Endothelial cell of umbilical vein (primary cell): ENCODE measurements at regions of chr19 and their contacts with region 1.

Region 1: GRCh38 chr19:48391107-48391986 is at the start of gene KDELR1:
- DNase-seq: peak; percentile 75
- H3K4me3 ChIP-seq: peak within 1 kb of the TSS; percentile 76 to 99 (median 83)
- H3K27ac ChIP-seq: peak within 1 kb of the TSS; percentile 65
- H3K4me1 ChIP-seq: peaks cover 3% of the 10 kb centered on the region
- H3K27me3 ChIP-seq: peaks cover 16 to 33% of the 10 kb centered on the region in 2 experiments
- CTCF ChIP-seq: peak; percentile 94 to 99
- POLR2A ChIP-seq: peak; percentile 77
- total RNA-seq, gene KDELR1: 199 and 200 TPM in 2 replicates

Region 2: GRCh38 chr19:48218997-48219396 is 172.3 kb before region 1 on chr19:
- CTCF ChIA-PET with region 1: no interaction called
- POLR2A ChIA-PET with region 1: no interaction called
- dilution Hi-C with region 1: no loop called
- intact Hi-C with region 1: no loop called
- DNase-seq: peak; percentile 65
- H3K4me3 ChIP-seq: no peak overlapping the region
- H3K27ac ChIP-seq: peak overlapping the region; percentile 63
- H3K4me1 ChIP-seq: peaks cover 19% of the 10 kb centered on the region
- H3K27me3 ChIP-seq: no peaks in the 10 kb centered on the region
- CTCF ChIP-seq: no peak
- POLR2A ChIP-seq: no peak

Region 3: GRCh38 chr19:48308631-48309586 is 82.4 kb before region 1 on chr19:
- CTCF ChIA-PET with region 1: interaction called, 14 read pairs
- POLR2A ChIA-PET with region 1: no interaction called
- dilution Hi-C with region 1: no loop called
- intact Hi-C with region 1: no loop called
- DNase-seq: peak; percentile 25
- H3K4me3 ChIP-seq: no peak overlapping the region
- H3K27ac ChIP-seq: no peak overlapping the region
- H3K4me1 ChIP-seq: peaks cover 20% of the 10 kb centered on the region
- H3K27me3 ChIP-seq: peaks cover 4 to 6% of the 10 kb centered on the region in 2 experiments
- CTCF ChIP-seq: peak in 1 of 2 donors; percentile 36
- POLR2A ChIP-seq: no peak

Region 4: DNA sequence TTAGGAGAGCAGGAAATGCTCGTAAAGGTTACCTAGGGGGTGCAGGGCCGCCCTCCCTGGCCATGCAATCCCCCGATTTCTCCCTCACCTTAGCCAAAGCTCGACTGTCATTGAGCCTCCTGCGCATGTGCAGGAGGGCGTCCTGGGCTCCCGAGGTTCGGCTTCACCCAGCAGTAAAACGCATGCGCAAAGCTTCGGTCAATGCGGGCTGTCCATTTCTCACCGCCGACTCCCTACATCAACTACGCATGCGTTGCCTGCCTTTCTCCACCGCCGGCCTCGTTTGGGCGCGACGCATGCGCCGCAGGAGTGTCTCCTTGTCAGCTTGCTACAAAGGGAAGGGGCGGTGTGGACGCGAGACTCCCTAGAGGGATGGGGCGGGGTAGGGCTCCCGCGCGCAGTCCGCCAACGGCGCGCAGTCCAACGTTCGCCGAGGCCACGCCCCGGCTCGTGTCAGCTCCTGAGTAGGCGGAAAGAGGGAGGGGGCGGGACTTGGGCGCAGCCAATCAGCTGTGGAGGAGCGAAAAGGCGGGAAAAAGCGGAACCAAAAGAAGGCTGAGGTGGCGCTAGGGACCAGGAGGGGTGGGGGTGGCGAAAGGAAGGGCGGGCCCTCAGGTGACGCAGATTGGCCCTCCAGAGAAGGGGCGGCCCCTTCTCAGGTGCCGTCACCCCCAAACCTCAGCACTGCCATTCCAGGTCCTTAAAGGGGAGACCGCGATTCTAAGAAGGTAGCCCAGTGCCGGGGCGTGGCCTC is 27.4 kb before region 1 on chr19 and contains the starts of genes SYNGR4 and TMEM143:
- CTCF ChIA-PET with region 1: interaction called, 20 read pairs
- POLR2A ChIA-PET with region 1: no interaction called
- dilution Hi-C with region 1: no loop called
- intact Hi-C with region 1: loop called (anchors 1 kb)
- DNase-seq: peak; percentile 100
- H3K4me3 ChIP-seq: peak within 1 kb of the TSS; percentile 11 to 53 (median 35)
- H3K27ac ChIP-seq: peak within 1 kb of the TSS; percentile 40
- H3K4me1 ChIP-seq: peaks cover 8% of the 10 kb centered on the region
- H3K27me3 ChIP-seq: no peaks in the 10 kb centered on the region
- CTCF ChIP-seq: no peak
- POLR2A ChIP-seq: peak; percentile 15
- total RNA-seq, gene SYNGR4: not detected in 2 replicates
- total RNA-seq, gene TMEM143: 4.6 and 7.3 TPM in 2 replicates

Region 5: GRCh38 chr19:48403606-48404005 is 12.3 kb after region 1 on chr19:
- CTCF ChIA-PET with region 1: interaction called, 22 read pairs
- POLR2A ChIA-PET with region 1: no interaction called
- dilution Hi-C with region 1: no loop called
- intact Hi-C with region 1: no loop called
- DNase-seq: peak; percentile 61
- H3K4me3 ChIP-seq: no peak overlapping the region
- H3K27ac ChIP-seq: no peak overlapping the region
- H3K4me1 ChIP-seq: peaks cover 2% of the 10 kb centered on the region
- H3K27me3 ChIP-seq: no peaks in the 10 kb centered on the region
- CTCF ChIP-seq: no peak
- POLR2A ChIP-seq: no peak

Region 6: DNA sequence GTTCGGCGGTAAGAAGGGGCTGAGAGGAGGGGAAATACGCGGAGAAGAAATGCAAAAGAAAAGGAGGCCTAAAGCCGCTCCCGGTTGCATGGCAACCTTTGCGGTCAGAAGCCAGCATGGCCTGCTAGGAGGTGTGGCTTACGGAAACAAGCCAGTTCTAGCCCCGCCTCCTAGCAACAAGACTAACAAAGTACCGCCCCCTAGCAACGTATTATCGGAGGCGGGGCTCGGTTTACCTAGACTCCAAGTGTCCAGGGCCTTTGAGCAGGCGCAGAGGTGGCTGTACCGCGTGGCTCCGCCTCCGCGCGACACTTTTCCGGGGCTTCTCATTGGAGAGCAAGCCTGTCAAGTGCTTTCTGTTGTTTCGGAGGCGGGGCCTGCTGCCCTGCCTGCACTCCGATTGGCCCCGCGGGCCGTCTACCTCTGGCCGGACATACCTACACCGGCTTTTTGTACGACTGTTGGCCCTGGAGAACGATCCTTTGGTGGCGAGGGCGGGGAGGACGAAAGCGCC is 77.5 kb after region 1 on chr19:
- CTCF ChIA-PET with region 1: interaction called, 3 read pairs
- POLR2A ChIA-PET with region 1: no interaction called
- dilution Hi-C with region 1: no loop called
- intact Hi-C with region 1: loop called (anchors 2 kb)
- DNase-seq: peak; percentile 100
- H3K4me3 ChIP-seq: peak overlapping the region; percentile 49 to 85 (median 74)
- H3K27ac ChIP-seq: peak overlapping the region; percentile 94
- H3K4me1 ChIP-seq: peaks cover 8% of the 10 kb centered on the region
- H3K27me3 ChIP-seq: no peaks in the 10 kb centered on the region
- CTCF ChIP-seq: no peak
- POLR2A ChIP-seq: no peak